ENCODE measurements at regions of chr14 and their contacts with region 1.

Region 1: DNA sequence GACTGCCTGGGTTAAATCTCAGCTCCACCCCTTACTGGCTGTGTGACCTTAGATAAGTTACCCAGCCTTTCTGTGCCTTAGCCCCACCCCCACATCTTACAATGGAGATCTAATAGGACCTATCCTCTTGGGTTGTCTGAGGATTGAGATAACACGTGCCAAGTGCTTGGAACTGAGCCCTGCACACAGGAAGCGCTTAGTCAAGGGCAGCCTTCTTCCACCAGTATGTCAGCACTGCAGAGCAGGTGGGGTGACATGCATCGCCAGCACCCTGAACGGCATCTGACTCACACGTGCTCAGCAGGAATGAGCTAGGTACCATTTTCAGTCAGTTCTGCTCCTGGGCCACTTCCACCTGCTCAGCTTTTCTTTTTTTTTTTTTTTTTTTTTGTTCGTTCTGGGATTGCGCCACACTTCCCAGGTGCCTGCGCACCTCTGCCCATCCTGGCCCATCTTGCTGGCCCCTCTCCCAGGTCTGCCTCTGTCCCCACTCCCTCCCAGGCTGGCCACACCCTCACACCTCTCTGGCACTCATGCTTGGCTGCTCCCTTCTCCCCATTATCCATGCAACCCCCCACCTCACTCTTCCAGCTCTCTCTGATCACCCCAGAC is 19.6 kb downstream of the LGMN start:
- DNase-seq: peak; percentile 89
- H3K4me3 ChIP-seq: no peak overlapping the region
- H3K27ac ChIP-seq: no peak overlapping the region
- H3K4me1 ChIP-seq: peaks cover 26% of the 10 kb centered on the region
- H3K27me3 ChIP-seq: peaks cover 2% of the 10 kb centered on the region
- CTCF ChIP-seq: no peak

Region 2: GRCh38 chr14:92740440-92740839 is 11.6 kb after region 1 on chr14:
- CTCF ChIA-PET with region 1: no interaction called
- dilution Hi-C with region 1: no loop called
- in situ Hi-C with region 1: no loop called
- intact Hi-C with region 1: no loop called
- DNase-seq: no peak
- H3K4me3 ChIP-seq: no peak overlapping the region
- H3K27ac ChIP-seq: no peak overlapping the region
- H3K4me1 ChIP-seq: no peaks in the 10 kb centered on the region
- H3K27me3 ChIP-seq: no peaks in the 10 kb centered on the region
- CTCF ChIP-seq: no peak

Region 3: GRCh38 chr14:92813201-92813600 is 84.3 kb after region 1 on chr14:
- CTCF ChIA-PET with region 1: interaction called, 13 read pairs
- dilution Hi-C with region 1: no loop called
- in situ Hi-C with region 1: no loop called
- intact Hi-C with region 1: no loop called
- DNase-seq: no peak
- H3K4me3 ChIP-seq: no peak overlapping the region
- H3K27ac ChIP-seq: no peak overlapping the region
- H3K4me1 ChIP-seq: no peaks in the 10 kb centered on the region
- H3K27me3 ChIP-seq: no peaks in the 10 kb centered on the region
- CTCF ChIP-seq: no peak

Measured in mammary epithelial cell (primary cell).